ENCODE measurements at regions of chr5 and their contacts with region 1.

Region 1: DNA sequence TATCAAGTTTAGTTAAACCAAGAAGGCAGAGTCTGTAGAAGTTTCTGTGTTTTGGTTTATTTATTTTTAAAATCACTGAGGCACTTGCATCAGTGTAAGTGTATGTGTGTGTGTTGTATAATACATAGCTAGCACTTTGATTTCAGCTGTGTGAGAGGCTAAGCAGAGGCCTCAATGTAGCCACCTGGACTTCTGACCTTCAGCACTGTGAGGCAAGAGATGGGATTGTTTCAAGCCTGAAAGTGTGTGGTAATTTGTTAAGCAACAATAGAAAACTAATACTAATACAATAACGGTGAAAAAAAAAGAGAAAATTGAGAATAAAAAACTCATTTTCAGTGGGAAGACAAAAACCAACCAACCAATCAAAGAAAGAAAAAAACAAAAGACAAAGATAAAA is 327.3 kb downstream of the CDH18 start:
- DNase-seq: no peak
- H3K4me3 ChIP-seq: no peak overlapping the region
- CTCF ChIP-seq: no peak
- POLR2A ChIP-seq: no peak

Region 2: GRCh38 chr5:19630876-19631275 is 29.8 kb before region 1 on chr5:
- intact Hi-C with region 1: no loop called
- DNase-seq: no peak
- H3K4me3 ChIP-seq: no peak overlapping the region
- CTCF ChIP-seq: no peak
- POLR2A ChIP-seq: no peak

Region 3: DNA sequence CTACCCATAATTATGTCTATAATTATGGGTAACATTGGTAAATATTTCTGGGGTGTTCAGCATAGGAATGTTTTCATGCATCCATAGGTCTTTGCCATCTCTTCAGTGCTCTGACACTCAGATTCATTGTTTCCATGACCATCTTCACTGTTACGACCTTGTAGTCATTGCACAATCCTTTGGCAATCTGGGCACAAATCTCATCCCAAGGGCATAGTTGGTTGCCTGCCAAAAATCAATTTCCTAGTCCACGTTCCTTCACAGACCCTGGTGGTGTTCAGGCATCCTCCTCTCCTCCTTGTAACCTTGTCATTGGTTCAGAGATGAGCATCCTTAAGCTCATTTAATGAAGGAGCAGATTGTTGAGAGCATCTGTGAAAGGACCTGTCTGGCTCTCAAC is 1791.8 kb after region 1 on chr5:
- intact Hi-C with region 1: loop called (anchors 10 kb)
- DNase-seq: no peak
- H3K4me3 ChIP-seq: no peak overlapping the region
- CTCF ChIP-seq: no peak
- POLR2A ChIP-seq: no peak

Measured in lower leg skin (tissue), 4 donors.